Endothelial cell of umbilical vein (primary cell): ENCODE measurements at regions of chr5 and their contacts with region 1.

Region 1: DNA sequence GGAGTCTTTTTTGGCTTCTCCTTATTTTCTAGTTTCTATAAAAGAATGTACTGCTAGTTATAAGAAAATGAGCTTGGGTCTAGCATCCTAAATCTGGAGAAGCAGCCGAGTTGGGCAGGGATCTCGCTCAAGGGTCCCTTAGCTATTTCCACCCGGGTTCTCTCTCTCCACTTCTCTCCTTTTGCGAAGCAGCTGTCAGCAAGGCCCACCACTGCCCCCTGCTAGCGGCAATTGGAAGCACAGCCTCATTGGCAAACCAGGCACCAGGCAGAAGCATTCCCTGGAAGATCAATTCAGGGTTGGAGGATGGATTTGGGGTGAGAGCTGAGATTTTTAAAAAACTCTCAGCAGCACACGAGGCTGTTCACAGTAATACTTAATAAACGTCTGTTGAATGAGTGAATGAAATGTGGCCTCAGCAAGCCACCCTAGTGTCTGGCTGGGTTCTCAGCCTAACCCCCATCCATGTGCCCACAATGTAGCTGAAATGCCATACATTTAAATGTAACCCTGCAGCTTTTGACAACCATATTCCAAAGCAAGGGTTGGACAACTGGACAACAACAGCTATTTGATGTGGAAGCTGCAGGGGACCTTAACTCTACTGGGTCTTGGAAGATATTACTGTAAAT is 34.6 kb upstream of the TNIP1 start:
- DNase-seq: peak; percentile 64
- H3K4me3 ChIP-seq: no peak overlapping the region
- H3K27ac ChIP-seq: no peak overlapping the region
- H3K4me1 ChIP-seq: no peaks in the 10 kb centered on the region
- H3K27me3 ChIP-seq: no peaks in the 10 kb centered on the region
- CTCF ChIP-seq: peak; percentile 93 to 94
- POLR2A ChIP-seq: no peak

Region 2: DNA sequence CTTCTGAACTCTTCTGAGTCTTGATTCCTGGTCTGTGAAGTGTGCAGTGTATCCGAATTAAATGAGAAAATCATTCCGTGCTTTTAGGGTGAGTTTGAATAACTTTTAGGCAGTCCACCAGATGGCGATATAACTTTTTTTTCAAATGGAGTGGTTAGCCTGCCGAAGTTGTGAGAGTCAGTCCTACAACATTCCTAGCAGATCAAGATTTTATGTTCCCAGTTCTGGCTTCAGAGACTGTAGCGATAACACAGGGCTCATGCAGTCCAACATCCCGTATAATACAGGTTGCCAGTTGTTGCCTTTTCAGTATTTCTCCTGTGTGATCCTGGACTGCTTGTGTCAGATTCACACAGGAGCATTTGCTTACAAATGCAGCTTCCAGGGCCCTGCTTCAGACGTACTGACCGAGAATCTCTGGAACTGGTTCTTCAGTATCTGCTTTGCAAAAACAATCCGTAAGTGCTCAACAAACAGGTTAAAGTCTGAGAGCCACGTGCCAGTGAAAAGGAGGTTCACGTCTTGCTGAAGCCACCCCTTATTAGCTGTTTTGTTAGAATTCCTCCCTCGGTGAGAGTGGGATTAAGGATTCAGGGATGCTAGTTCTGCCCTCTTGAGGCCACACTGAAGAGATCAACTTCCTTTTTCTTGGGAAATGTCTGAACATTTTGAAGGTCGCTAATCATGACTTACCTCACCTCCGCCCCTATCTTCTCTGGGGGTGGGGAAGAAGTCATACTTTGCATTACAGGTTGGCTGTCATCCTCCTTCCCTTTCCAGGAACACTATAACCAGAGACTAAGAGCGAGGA is 314.1 kb before region 1 on chr5:
- CTCF ChIA-PET with region 1: interaction called, 15 read pairs
- POLR2A ChIA-PET with region 1: no interaction called
- dilution Hi-C with region 1: no loop called
- intact Hi-C with region 1: no loop called
- DNase-seq: peak; percentile 80
- H3K4me3 ChIP-seq: peak overlapping the region in 2 of 3 experiments; percentile 14 to 24
- H3K27ac ChIP-seq: no peak overlapping the region
- H3K4me1 ChIP-seq: no peaks in the 10 kb centered on the region
- H3K27me3 ChIP-seq: peaks cover 15 to 44% of the 10 kb centered on the region in 2 experiments
- CTCF ChIP-seq: peak; percentile 31 to 53
- POLR2A ChIP-seq: no peak

Region 3: GRCh38 chr5:151037561-151038411 is 77.6 kb before region 1 on chr5:
- CTCF ChIA-PET with region 1: interaction called, 17 read pairs
- POLR2A ChIA-PET with region 1: interaction called, 3 read pairs
- dilution Hi-C with region 1: no loop called
- intact Hi-C with region 1: no loop called
- DNase-seq: peak; percentile 86
- H3K4me3 ChIP-seq: no peak overlapping the region
- H3K27ac ChIP-seq: peak overlapping the region; percentile 36
- H3K4me1 ChIP-seq: peaks cover 21% of the 10 kb centered on the region
- H3K27me3 ChIP-seq: no peaks in the 10 kb centered on the region
- CTCF ChIP-seq: no peak
- POLR2A ChIP-seq: no peak

Region 4: GRCh38 chr5:151080623-151081430 is 34.6 kb before region 1 on chr5 and contains the start of gene TNIP1:
- CTCF ChIA-PET with region 1: interaction called, 19 read pairs
- POLR2A ChIA-PET with region 1: interaction called, 3 read pairs
- dilution Hi-C with region 1: no loop called
- intact Hi-C with region 1: no loop called
- DNase-seq: peak; percentile 92
- H3K4me3 ChIP-seq: peak within 1 kb of the TSS; percentile 51 to 77 (median 62)
- H3K27ac ChIP-seq: peak within 1 kb of the TSS; percentile 94
- H3K4me1 ChIP-seq: peaks cover 37% of the 10 kb centered on the region
- H3K27me3 ChIP-seq: no peaks in the 10 kb centered on the region
- CTCF ChIP-seq: no peak
- POLR2A ChIP-seq: peak; percentile 57
- total RNA-seq, gene TNIP1: 87.0 and 96.8 TPM in 2 replicates

Region 5: GRCh38 chr5:151101151-151101550 is 14.2 kb before region 1 on chr5:
- CTCF ChIA-PET with region 1: interaction called, 19 read pairs
- POLR2A ChIA-PET with region 1: no interaction called
- dilution Hi-C with region 1: no loop called
- intact Hi-C with region 1: no loop called
- DNase-seq: no peak
- H3K4me3 ChIP-seq: no peak overlapping the region
- H3K27ac ChIP-seq: no peak overlapping the region
- H3K4me1 ChIP-seq: no peaks in the 10 kb centered on the region
- H3K27me3 ChIP-seq: no peaks in the 10 kb centered on the region
- CTCF ChIP-seq: no peak
- POLR2A ChIP-seq: no peak

Region 6: GRCh38 chr5:151164686-151165392 is 49.4 kb after region 1 on chr5:
- CTCF ChIA-PET with region 1: interaction called, 51 read pairs
- POLR2A ChIA-PET with region 1: no interaction called
- dilution Hi-C with region 1: no loop called
- intact Hi-C with region 1: no loop called
- DNase-seq: peak; percentile 91
- H3K4me3 ChIP-seq: no peak overlapping the region
- H3K27ac ChIP-seq: no peak overlapping the region
- H3K4me1 ChIP-seq: peaks cover 8% of the 10 kb centered on the region
- H3K27me3 ChIP-seq: peaks cover 0 to 1% of the 10 kb centered on the region in 2 experiments
- CTCF ChIP-seq: peak; percentile 79 to 90
- POLR2A ChIP-seq: no peak